ENCODE measurements at regions of chr12 and their contacts with region 1.

Region 1: GRCh38 chr12:56321027-56321426 is 5.2 kb upstream of the CNPY2 start:
- DNase-seq: no peak
- H3K4me3 Mint-ChIP-seq: no peak overlapping the region
- H3K27ac Mint-ChIP-seq: no peak overlapping the region
- H3K4me1 Mint-ChIP-seq: peaks cover 12% of the 10 kb centered on the region
- H3K27me3 Mint-ChIP-seq: no peaks in the 10 kb centered on the region

Region 2: DNA sequence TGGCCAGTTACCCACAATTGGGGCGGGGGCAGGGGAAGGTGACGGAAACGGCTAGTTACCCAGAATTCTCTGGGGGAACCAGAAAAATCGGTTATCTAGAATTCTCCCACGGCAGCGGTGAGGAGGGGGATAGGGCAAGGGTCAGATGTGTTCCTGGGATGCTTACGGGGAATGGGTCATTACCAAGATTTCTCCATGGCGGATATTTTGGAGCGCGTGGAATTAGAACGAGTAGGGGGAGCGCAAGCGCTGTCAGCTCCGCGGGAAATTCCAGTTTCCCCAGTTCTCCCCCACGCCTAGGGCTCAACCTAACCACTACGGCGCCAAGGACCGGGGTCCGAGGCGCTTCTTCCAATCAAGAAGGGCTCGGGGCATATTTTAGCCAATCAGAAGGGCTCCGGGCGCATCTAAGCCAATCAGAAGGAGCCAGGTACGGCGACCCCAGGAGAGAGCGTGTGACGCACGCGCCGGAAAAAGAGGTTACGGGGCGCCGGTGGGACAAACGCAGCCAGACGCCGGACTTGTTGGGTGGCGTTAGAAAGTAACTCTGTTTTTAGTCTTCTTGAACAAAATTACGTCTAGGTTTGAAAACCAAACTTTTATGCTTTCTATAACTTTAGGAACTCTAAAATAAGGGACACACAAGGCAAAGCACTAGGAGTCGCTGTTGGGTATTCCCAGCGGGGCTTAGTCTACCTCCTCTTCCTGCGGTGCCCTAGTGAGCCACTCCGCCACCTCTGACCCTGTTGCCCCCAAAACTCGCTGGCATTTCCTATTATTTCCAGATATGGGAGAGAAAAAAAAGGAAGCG is 12.9 kb after region 1 on chr12 and contains the start of gene PAN2:
- CTCF ChIA-PET with region 1: interaction called, 8 read pairs
- POLR2A ChIA-PET with region 1: interaction called, 10 read pairs
- DNase-seq: peak; percentile 95
- H3K4me3 Mint-ChIP-seq: peak within 1 kb of the TSS; percentile 88
- H3K27ac Mint-ChIP-seq: peak within 1 kb of the TSS; percentile 97
- H3K4me1 Mint-ChIP-seq: peaks cover 49% of the 10 kb centered on the region
- H3K27me3 Mint-ChIP-seq: no peaks in the 10 kb centered on the region
- total RNA-seq, gene PAN2: 76.9 to 78.9 TPM

Measured in activated CD4-positive, alpha-beta T cell treated with anti-CD3 and anti-CD28 coated beads, Interleukin-2, amount 10 ng/mL, durations not matched to agents 7 days and 5 days (primary cell).